ENCODE measurements at regions of chr11 and their contacts with region 1.

Region 1: GRCh38 chr11:31870609-31871309 is 59.6 kb upstream of the PAX6 start:
- DNase-seq: peak; percentile 62
- H3K4me3 ChIP-seq: no peak overlapping the region
- H3K27ac ChIP-seq: no peak overlapping the region
- H3K4me1 ChIP-seq: no peaks in the 10 kb centered on the region
- H3K27me3 ChIP-seq: peaks cover 4 to 12% of the 10 kb centered on the region in 2 experiments
- CTCF ChIP-seq: peak; percentile 43 to 76
- POLR2A ChIP-seq: no peak

Region 2: GRCh38 chr11:31107062-31107461 is 763.7 kb before region 1 on chr11:
- CTCF ChIA-PET with region 1: interaction called, 6 read pairs
- POLR2A ChIA-PET with region 1: no interaction called
- dilution Hi-C with region 1: no loop called
- intact Hi-C with region 1: loop called (anchors 10 kb)
- DNase-seq: peak; percentile 44
- H3K4me3 ChIP-seq: no peak overlapping the region
- H3K27ac ChIP-seq: no peak overlapping the region
- H3K4me1 ChIP-seq: no peaks in the 10 kb centered on the region
- H3K27me3 ChIP-seq: no peaks in the 10 kb centered on the region
- CTCF ChIP-seq: peak; percentile 20 to 53
- POLR2A ChIP-seq: no peak

Region 3: GRCh38 chr11:31240338-31240904 is 630.3 kb before region 1 on chr11:
- CTCF ChIA-PET with region 1: interaction called, 17 read pairs
- POLR2A ChIA-PET with region 1: no interaction called
- dilution Hi-C with region 1: no loop called
- intact Hi-C with region 1: loop called (anchors 1 kb)
- DNase-seq: peak; percentile 51
- H3K4me3 ChIP-seq: no peak overlapping the region
- H3K27ac ChIP-seq: no peak overlapping the region
- H3K4me1 ChIP-seq: no peaks in the 10 kb centered on the region
- H3K27me3 ChIP-seq: no peaks in the 10 kb centered on the region
- CTCF ChIP-seq: peak; percentile 38 to 51
- POLR2A ChIP-seq: no peak

Region 4: GRCh38 chr11:31340903-31341572 is 529.7 kb before region 1 on chr11:
- CTCF ChIA-PET with region 1: interaction called, 19 read pairs
- POLR2A ChIA-PET with region 1: no interaction called
- dilution Hi-C with region 1: no loop called
- intact Hi-C with region 1: loop called (anchors 1 kb)
- DNase-seq: peak; percentile 43
- H3K4me3 ChIP-seq: no peak overlapping the region
- H3K27ac ChIP-seq: no peak overlapping the region
- H3K4me1 ChIP-seq: no peaks in the 10 kb centered on the region
- H3K27me3 ChIP-seq: peaks cover 3 to 4% of the 10 kb centered on the region in 2 experiments
- CTCF ChIP-seq: peak; percentile 49 to 70
- POLR2A ChIP-seq: no peak

Region 5: GRCh38 chr11:31397239-31397834 is 473.4 kb before region 1 on chr11:
- CTCF ChIA-PET with region 1: interaction called, 75 read pairs
- POLR2A ChIA-PET with region 1: no interaction called
- dilution Hi-C with region 1: no loop called
- intact Hi-C with region 1: loop called (anchors 1 kb)
- DNase-seq: peak; percentile 39
- H3K4me3 ChIP-seq: no peak overlapping the region
- H3K27ac ChIP-seq: no peak overlapping the region
- H3K4me1 ChIP-seq: no peaks in the 10 kb centered on the region
- H3K27me3 ChIP-seq: no peaks in the 10 kb centered on the region
- CTCF ChIP-seq: peak; percentile 37 to 39
- POLR2A ChIP-seq: no peak

Region 6: DNA sequence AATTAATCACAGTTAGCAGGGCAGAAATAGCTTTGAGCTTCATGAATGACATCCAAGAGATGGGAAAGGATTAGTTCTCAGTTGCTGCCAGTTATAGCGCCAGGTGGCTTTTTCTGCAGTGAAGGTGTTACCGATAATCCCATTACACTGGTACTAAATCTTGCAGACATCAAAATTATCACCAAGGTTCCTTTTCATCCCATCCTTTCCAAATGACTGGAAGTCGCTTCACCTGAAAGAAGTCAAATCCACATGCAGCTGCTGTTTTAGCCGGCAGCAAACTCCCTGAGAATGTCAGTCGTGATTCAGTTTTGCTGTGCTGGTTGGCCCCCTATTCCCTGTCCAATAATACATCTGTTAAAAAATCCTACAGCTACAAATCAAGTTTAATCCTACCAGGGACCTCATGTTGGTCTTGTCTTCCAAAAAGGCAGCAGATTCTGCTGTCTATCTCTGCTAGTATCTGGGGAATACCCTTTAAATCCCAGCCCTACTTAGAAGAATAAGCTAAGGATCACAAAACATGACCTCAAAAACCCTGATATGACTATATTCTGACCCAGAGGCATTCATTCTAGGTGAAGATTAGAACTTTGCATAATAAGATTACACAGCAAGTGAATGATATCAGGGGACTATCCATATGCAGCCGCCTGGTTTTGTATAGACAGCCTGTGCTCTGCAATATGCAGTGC is 393.1 kb before region 1 on chr11:
- CTCF ChIA-PET with region 1: interaction called, 10 read pairs
- POLR2A ChIA-PET with region 1: no interaction called
- dilution Hi-C with region 1: no loop called
- intact Hi-C with region 1: no loop called
- DNase-seq: no peak
- H3K4me3 ChIP-seq: no peak overlapping the region
- H3K27ac ChIP-seq: no peak overlapping the region
- H3K4me1 ChIP-seq: no peaks in the 10 kb centered on the region
- H3K27me3 ChIP-seq: no peaks in the 10 kb centered on the region
- CTCF ChIP-seq: no peak
- POLR2A ChIP-seq: no peak

Region 7: DNA sequence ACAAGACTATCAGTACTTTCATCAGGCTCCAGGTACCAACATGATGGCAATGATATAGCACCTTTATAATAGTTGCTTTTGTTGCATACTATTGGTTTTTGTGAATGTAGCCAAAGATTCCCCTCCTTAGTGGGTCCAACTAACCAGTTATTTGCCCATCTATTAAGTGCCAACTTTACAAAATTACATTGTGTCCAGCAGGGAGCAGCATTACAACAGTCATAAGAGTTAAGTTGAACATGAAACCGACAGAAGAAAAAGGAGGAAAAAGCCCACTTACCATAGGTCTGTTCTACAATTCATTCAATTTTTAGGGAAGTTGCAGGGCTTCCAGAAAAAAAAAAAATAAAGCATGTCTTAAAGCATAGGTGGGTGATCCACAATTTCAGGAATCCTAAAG is 382.9 kb before region 1 on chr11:
- CTCF ChIA-PET with region 1: interaction called, 69 read pairs
- POLR2A ChIA-PET with region 1: no interaction called
- dilution Hi-C with region 1: no loop called
- intact Hi-C with region 1: loop called (anchors 1 kb)
- DNase-seq: peak; percentile 74
- H3K4me3 ChIP-seq: no peak overlapping the region
- H3K27ac ChIP-seq: no peak overlapping the region
- H3K4me1 ChIP-seq: no peaks in the 10 kb centered on the region
- H3K27me3 ChIP-seq: no peaks in the 10 kb centered on the region
- CTCF ChIP-seq: peak; percentile 24 to 28
- POLR2A ChIP-seq: no peak

Measured in endothelial cell of umbilical vein (primary cell).